Activated CD4-positive, alpha-beta memory T cell treated with anti-CD3 and anti-CD28 coated beads, Interleukin-2, amount 10 ng/mL, durations not matched to agents 7 days and 5 days (primary cell): ENCODE measurements at regions of chr2 and their contacts with region 1.

Region 1: GRCh38 chr2:157480182-157480961 is 36.5 kb upstream of the CYTIP start:
- DNase-seq: peak; percentile 58
- H3K4me3 Mint-ChIP-seq: peak overlapping the region; percentile 55
- H3K27ac Mint-ChIP-seq: peak overlapping the region; percentile 87
- H3K4me1 Mint-ChIP-seq: peaks cover 72% of the 10 kb centered on the region
- H3K27me3 Mint-ChIP-seq: no peaks in the 10 kb centered on the region

Region 2: DNA sequence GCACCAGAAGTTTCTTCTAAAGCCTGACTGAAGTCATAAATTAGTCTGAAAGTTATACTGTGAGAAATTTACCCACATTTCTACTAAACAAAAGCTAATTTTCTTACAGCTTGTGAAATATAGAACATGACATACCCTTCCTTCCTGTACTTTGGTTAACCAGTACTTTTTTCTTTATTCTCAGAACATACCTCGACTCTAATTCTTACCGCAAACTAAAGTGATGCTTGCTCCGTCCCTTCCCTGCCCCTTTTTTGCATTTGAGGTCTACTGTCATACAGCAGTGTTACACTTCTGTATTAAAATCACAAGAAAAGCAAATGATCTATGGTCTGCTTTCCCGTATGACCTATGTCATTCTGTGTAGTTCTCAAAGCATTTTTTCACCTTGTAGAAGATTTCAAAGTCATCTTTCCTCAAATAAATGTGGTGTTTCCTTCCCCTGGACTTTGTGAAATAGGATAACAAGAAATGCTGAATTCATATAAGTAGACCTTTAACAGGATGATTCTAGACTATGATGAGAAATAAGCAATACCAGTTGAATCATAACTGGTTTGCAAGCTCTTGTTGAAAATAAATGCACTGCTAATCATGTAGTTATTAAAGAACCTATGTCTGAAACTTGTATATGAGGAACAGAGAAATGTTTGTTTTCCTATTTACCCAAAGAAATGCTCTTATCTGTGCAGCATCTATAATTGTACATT is 66.9 kb before region 1 on chr2:
- CTCF ChIA-PET with region 1: interaction called, 4 read pairs
- POLR2A ChIA-PET with region 1: interaction called, 28 read pairs
- DNase-seq: peak; percentile 69
- H3K4me3 Mint-ChIP-seq: peak overlapping the region; percentile 63
- H3K27ac Mint-ChIP-seq: peak overlapping the region; percentile 89
- H3K4me1 Mint-ChIP-seq: peaks cover 79% of the 10 kb centered on the region
- H3K27me3 Mint-ChIP-seq: no peaks in the 10 kb centered on the region

Region 3: GRCh38 chr2:157433394-157433793 is 47.0 kb before region 1 on chr2:
- CTCF ChIA-PET with region 1: interaction called, 4 read pairs
- POLR2A ChIA-PET with region 1: interaction called, 291 read pairs
- DNase-seq: no peak
- H3K4me3 Mint-ChIP-seq: peak overlapping the region; percentile 91
- H3K27ac Mint-ChIP-seq: peak overlapping the region; percentile 80
- H3K4me1 Mint-ChIP-seq: peaks cover 78% of the 10 kb centered on the region
- H3K27me3 Mint-ChIP-seq: no peaks in the 10 kb centered on the region

Region 4: DNA sequence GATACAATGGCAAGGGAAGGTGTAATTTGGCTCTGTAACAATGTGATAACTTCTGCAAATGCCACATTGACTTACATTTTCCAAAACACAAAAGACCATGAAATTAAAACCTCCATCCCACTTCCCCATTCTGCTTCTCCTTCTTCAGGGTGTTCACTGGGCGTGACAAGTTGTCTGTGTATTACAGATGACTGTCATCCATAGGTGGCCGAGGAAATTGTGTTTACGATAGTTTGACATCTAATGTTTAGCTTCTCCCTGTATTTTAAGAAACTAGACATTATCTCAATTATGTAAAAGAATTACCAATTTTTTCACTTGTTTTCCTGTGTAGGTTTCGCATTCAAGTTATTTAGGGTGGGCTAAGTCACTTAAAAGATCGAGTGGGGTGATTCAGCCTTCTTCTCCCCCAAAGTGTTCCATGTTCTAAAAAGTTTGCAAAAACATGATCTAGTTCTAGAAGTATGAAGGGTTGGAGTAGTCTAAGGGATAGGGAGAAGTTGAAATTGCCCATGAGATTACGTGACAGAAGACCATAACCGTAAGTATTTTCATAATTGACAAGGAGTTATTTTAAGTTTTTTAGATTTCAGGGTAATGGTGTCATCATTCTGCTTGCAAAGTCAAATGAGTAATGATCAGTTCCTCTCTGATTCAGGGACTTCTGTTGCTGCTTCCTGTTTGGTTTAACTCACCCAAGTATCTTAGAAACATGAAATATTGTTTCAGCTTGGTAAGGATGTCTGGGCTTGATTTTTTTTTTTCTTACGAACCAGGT is 11.3 kb before region 1 on chr2:
- CTCF ChIA-PET with region 1: interaction called, 8 read pairs
- POLR2A ChIA-PET with region 1: interaction called, 29 read pairs
- DNase-seq: no peak
- H3K4me3 Mint-ChIP-seq: peak overlapping the region; percentile 72
- H3K27ac Mint-ChIP-seq: peak overlapping the region; percentile 99
- H3K4me1 Mint-ChIP-seq: peaks cover 92% of the 10 kb centered on the region
- H3K27me3 Mint-ChIP-seq: no peaks in the 10 kb centered on the region

Region 5: GRCh38 chr2:157523270-157524247 is 43.2 kb after region 1 on chr2:
- CTCF ChIA-PET with region 1: no interaction called
- POLR2A ChIA-PET with region 1: no interaction called
- DNase-seq: no peak
- H3K4me3 Mint-ChIP-seq: no peak overlapping the region
- H3K27ac Mint-ChIP-seq: no peak overlapping the region
- H3K4me1 Mint-ChIP-seq: no peaks in the 10 kb centered on the region
- H3K27me3 Mint-ChIP-seq: peaks cover 3% of the 10 kb centered on the region

Region 6: DNA sequence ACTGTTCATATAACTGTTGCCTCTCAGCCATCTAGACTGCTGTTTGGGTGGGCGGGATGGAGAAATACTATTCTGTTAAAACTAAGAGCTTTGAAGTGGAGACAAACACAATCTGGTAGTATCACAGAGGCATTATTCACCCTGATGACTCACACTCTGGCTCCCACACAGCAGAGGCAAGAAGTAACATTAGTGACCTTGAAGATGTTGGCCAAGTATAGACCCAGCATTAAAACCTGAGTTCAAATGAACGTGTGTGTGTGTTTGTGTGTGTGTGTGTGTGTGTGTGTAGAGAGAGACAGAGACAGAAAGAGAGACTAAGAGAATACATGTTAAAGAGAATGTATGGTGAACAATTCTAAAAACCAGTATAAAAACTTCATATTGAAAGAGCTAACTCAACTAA is 418.2 kb after region 1 on chr2:
- CTCF ChIA-PET with region 1: no interaction called
- POLR2A ChIA-PET with region 1: interaction called, 14 read pairs
- DNase-seq: peak; percentile 61
- H3K4me3 Mint-ChIP-seq: peak overlapping the region; percentile 81
- H3K27ac Mint-ChIP-seq: peak overlapping the region; percentile 99
- H3K4me1 Mint-ChIP-seq: peaks cover 80% of the 10 kb centered on the region
- H3K27me3 Mint-ChIP-seq: no peaks in the 10 kb centered on the region